GM12878 (cell line): ENCODE measurements at regions of chrX and their contacts with region 1.

Region 1: GRCh38 chrX:149120459-149120858 is 384.6 kb downstream of the IDS start:
- DNase-seq: no peak
- ATAC-seq: peak; percentile 64
- H3K4me3 ChIP-seq: no peak overlapping the region
- H3K27ac ChIP-seq: no peak overlapping the region
- H3K4me1 ChIP-seq: no peaks in the 10 kb centered on the region
- H3K27me3 ChIP-seq: no peaks in the 10 kb centered on the region
- CTCF ChIP-seq: 0 out of 6 replicates have a peak, but pooled peaks of 1 of the 3 experiments have one; percentile 3
- EP300 ChIP-seq: no peak
- POLR2A ChIP-seq: no peak
- RAD21 ChIP-seq: peak; percentile 6; the same call in 1 of the 2 replicates

Region 2: GRCh38 chrX:149010009-149010852 is 110.2 kb before region 1 on chrX:
- CTCF ChIA-PET with region 1: no interaction called
- POLR2A ChIA-PET with region 1: interaction called, 3 read pairs
- RAD21 ChIA-PET with region 1: interaction called, 12 read pairs
- SMC1A ChIA-PET with region 1: interaction called, 21 read pairs
- in situ Hi-C with region 1: no loop called
- intact Hi-C with region 1: no loop called
- DNase-seq: no peak
- ATAC-seq: no peak
- H3K4me3 ChIP-seq: no peak overlapping the region
- H3K27ac ChIP-seq: no peak overlapping the region
- H3K4me1 ChIP-seq: no peaks in the 10 kb centered on the region; the same call in 1 of the 2 replicates
- H3K27me3 ChIP-seq: no peaks in the 10 kb centered on the region
- CTCF ChIP-seq: no peak
- EP300 ChIP-seq: no peak
- POLR2A ChIP-seq: no peak
- RAD21 ChIP-seq: no peak

Region 3: DNA sequence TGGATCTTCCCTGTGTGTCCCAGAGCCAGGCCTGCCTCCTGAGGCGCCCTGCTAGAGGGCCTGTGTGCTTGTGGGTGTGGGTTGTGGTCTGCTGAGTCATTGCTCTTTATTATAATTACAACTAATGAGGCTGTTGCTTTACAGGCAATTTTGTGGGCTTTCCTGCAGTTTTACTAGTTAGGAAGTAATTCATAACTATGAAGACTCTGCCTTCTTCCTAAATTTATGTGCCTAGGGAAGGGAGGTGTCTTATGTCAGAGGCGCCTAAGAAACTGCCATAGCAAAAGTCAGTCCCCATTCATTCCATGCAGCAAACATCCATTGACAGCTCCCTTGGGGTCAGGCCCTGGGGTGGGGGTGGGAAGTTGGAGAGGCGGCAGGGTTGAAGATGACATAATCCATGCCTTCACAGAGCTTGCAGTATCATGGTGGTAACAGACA is 25.4 kb after region 1 on chrX:
- CTCF ChIA-PET with region 1: interaction called, 3 read pairs
- POLR2A ChIA-PET with region 1: interaction called, 11 read pairs
- RAD21 ChIA-PET with region 1: interaction called, 6 read pairs
- SMC1A ChIA-PET with region 1: interaction called, 11 read pairs
- in situ Hi-C with region 1: no loop called
- intact Hi-C with region 1: no loop called
- DNase-seq: no peak
- ATAC-seq: peak; percentile 92
- H3K4me3 ChIP-seq: no peak overlapping the region
- H3K27ac ChIP-seq: no peak overlapping the region
- H3K4me1 ChIP-seq: no peaks in the 10 kb centered on the region
- H3K27me3 ChIP-seq: no peaks in the 10 kb centered on the region
- CTCF ChIP-seq: no peak
- EP300 ChIP-seq: peak in 1 of 2 experiments; percentile 17; a peak in 1 of 4 replicates
- POLR2A ChIP-seq: no peak
- RAD21 ChIP-seq: no peak

Region 4: DNA sequence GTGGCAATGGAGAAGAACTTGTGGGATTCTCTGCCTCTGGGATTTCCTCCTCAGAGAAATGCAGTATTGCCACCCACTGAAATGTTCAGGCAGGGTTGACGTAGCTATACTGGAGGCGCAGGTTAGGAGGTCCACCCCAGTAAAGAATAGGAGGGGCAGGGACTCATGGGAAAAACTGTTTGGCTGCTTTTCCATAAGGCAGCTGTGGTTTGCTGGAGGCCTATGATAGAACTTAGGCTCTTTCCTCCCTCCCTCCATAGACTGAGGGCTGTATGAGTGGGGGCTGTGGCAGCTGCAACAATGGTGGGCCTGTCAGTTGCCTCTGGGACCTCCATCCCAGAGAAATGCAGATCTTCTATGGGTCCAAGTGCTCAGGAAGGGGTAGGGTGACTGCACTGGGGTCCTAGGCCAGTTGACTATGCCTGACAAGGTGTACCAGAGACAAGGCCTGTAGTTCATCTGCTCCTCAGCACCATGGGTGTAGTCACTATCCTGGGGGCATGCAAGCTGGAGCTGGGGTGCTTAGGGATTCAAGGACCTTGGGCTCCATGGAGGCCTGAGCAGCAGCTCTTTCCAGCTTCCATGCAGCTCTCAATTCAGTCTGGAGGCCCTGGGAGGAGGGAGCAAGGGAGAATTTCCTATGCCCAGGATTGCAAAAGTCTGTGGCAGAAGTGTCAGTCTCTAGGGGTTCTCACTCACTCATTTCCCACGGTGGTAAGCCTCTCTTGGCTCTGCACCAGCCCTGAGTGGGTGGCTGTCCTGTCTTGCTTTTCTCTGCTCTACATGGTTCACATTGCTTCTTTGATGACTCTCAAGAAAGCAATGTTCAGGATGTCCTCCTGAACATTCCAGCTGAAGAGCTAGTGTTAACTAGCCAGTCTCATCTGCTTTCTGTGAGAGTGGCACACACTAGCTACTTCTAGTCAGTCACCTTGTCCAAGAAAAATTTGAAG is 31.6 kb after region 1 on chrX:
- CTCF ChIA-PET with region 1: interaction called, 4 read pairs
- POLR2A ChIA-PET with region 1: interaction called, 3 read pairs
- RAD21 ChIA-PET with region 1: interaction called, 5 read pairs
- SMC1A ChIA-PET with region 1: interaction called, 11 read pairs
- in situ Hi-C with region 1: no loop called
- intact Hi-C with region 1: no loop called
- DNase-seq: peak; percentile 24
- ATAC-seq: peak; percentile 85
- H3K4me3 ChIP-seq: no peak overlapping the region
- H3K27ac ChIP-seq: no peak overlapping the region
- H3K4me1 ChIP-seq: no peaks in the 10 kb centered on the region
- H3K27me3 ChIP-seq: no peaks in the 10 kb centered on the region
- CTCF ChIP-seq: no peak
- EP300 ChIP-seq: no peak
- POLR2A ChIP-seq: no peak
- RAD21 ChIP-seq: no peak